ENCODE measurements at regions of chr7 and their contacts with region 1.

Region 1: DNA sequence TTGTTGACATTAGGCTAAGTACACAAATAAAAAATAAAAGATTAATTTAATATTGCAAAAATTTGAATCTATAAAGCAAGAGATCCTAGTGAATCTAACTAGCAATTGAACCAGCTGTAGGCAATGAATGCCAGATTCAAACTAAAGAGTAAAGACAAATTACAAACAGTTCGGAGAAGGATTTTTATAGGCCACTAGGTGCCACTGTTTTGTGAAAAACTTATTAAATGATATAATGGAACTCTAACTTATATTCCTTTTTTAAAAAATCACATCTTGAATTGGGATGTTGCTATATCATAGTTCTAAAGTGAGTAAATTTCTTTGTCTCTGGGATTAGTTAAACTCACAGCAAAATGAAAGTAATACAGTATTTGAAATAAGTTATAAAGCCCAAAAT is 39.1 kb upstream of the GNAI1 start:
- DNase-seq: no peak
- H3K4me3 ChIP-seq: no peak overlapping the region
- CTCF ChIP-seq: peak; percentile 9

Region 2: DNA sequence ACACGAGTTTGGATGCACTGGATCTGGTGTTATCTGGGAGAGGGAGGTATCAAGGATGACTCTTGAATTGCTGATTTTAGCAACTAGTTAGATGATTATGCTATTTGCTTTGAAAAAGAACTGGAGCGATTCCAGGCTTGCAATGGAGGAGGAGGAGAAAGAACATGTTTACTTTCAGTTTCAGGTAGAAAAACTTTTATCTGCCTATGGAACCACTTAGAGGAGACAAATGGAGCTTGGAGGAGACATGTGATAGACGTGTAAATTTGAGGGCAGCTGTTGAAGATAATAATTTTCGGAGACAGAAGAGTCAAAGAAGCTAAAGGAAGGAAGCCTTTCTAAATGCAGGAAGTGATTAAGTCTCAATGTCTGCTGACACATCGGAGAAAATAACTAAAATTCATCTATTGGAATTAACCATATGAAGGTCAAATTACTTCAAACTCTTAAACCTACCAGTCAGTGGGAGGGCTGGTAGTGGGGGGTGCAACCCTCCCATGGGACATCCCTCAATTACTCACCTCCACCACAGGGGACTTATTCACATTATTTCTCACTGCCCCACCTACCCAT is 17.3 kb before region 1 on chr7:
- CTCF ChIA-PET with region 1: interaction called, 11 read pairs
- POLR2A ChIA-PET with region 1: no interaction called
- DNase-seq: no peak
- H3K4me3 ChIP-seq: peak overlapping the region; percentile 7
- CTCF ChIP-seq: no peak

Region 3: DNA sequence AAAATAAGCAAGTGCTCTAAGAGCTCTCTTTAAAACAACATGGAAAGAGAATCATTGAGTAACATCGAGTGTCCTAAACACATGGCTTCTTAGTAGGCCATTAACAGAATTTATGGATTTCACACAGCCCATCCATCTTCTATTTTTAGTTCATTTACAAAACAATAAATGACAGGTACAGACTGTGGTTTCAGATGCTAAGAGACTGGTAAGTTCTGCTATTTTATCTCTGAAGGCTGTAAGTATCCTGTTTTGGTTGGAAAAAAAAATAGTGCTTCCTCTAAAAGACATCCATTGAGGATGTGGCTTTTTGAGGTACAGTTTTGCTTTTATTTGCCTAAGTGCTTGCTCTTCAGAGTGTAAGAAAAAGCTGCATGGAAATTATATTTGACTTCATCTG is 11.7 kb after region 1 on chr7:
- CTCF ChIA-PET with region 1: interaction called, 24 read pairs
- POLR2A ChIA-PET with region 1: no interaction called
- DNase-seq: no peak
- H3K4me3 ChIP-seq: no peak overlapping the region
- CTCF ChIP-seq: no peak

Region 4: DNA sequence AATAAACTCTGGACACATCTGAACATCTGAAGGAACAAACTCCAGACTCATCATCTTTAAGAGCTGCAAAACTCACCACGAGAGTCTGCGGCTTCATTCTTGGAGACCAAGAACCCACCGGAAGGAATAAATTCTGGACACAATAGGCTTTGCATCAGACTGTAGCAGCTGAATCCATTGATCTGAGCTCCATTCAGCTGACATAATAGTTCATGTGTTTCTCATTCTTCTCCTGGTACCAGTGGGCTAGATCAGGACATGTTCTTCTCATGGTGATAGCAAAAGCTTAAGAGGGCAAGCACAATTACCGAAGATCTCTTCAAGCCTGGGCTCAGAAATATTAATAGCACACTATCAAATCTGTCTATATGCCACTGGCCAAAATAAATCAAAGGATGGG is 18.6 kb after region 1 on chr7:
- CTCF ChIA-PET with region 1: interaction called, 12 read pairs
- POLR2A ChIA-PET with region 1: no interaction called
- DNase-seq: no peak
- H3K4me3 ChIP-seq: no peak overlapping the region
- CTCF ChIP-seq: no peak

Region 5: GRCh38 chr7:80134536-80135320 is 39.2 kb after region 1 on chr7 and contains the start of gene GNAI1:
- CTCF ChIA-PET with region 1: interaction called, 11 read pairs
- POLR2A ChIA-PET with region 1: no interaction called
- DNase-seq: no peak
- H3K4me3 ChIP-seq: peak within 1 kb of the TSS; percentile 68
- CTCF ChIP-seq: peak; percentile 37

Measured in AG04449 (cell line).